MCF 10A (cell line): ENCODE measurements at regions of chr9 and their contacts with region 1.

Region 1: DNA sequence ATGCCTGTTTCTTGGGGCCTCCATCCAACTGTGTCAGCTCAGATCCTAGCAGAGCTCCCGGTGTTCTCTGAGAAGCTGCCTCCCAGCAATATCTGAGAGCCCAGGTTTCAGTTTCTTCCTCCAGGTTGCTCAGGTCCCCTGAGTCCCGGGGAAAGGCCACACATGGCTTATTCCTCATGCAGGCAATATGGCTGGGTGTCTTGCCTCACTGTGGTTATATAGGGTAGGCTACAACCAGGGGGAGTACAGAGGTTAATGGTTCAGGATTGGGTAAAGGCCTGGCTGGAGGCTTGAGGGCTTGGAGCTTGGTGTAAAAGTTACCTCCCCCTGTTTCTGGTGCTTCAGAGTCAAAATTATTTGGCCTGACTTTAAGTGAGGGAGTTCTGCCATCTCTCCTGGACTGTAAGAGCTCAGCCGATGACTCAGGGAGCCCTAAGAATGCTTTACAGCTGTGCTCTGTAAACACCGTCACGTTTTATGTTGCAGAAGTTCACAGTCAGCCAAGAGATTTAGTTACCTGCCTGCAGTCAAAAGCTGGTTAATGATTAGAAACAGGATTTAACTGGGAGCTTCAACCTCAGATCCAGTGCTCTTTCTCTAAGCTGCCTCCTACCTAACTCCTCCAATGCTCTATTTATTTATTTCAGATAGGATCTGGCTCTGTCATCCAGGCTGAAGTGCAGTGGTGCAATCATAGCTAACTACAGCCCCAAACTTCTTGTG is 24.3 kb upstream of the UBAP2 start:
- DNase-seq: peak; percentile 80
- H3K4me3 Mint-ChIP-seq: no peak overlapping the region
- H3K27ac Mint-ChIP-seq: peak overlapping the region; percentile 81
- H3K4me1 Mint-ChIP-seq: peaks cover 22% of the 10 kb centered on the region
- H3K27me3 Mint-ChIP-seq: no peaks in the 10 kb centered on the region
- CTCF ChIP-seq: no peak

Region 2: DNA sequence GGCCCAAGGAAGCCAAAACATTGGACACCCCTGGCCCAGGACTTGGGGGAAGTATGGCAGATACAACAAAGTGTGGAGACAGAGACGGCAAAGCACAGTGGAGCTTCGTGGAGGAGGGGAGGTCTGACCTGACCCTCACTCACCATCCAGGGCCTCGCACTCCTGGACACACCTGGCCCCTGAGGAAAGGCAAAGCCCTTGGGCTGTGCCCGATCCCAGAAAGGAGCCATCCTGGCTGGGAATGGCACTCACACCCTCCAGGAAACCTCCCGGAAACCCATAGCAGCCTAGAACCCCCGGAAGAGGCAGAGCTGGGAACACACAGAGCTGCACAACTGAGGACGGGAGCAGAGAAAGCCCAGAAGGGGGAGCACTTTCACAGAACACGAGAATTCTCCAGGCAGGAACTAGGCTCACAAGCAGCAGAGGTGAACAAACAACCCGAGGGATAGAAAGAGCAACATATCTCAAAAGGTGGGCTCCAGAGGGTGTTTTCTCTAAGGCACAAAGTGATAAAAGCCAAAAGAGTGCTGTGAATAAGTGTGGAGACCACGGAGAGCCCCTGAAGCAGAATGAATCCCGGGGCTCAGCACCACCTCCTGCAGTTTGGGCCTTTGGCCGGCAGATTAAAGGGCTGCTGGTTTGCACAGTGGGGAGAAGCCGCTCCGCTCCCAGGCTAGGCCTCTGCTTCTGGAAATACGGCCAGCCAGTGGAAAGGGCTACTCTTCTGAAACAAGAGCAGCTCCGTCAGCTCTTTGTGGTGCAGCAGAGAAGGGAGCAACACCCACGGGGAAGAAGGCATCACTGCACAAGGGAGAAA is 147.8 kb before region 1 on chr9:
- CTCF ChIA-PET with region 1: interaction called, 22 read pairs
- POLR2A ChIA-PET with region 1: no interaction called
- intact Hi-C with region 1: loop called (anchors 5 kb)
- DNase-seq: peak; percentile 67
- H3K4me3 Mint-ChIP-seq: no peak overlapping the region
- H3K27ac Mint-ChIP-seq: no peak overlapping the region
- H3K4me1 Mint-ChIP-seq: no peaks in the 10 kb centered on the region
- H3K27me3 Mint-ChIP-seq: no peaks in the 10 kb centered on the region
- CTCF ChIP-seq: peak; percentile 43

Region 3: DNA sequence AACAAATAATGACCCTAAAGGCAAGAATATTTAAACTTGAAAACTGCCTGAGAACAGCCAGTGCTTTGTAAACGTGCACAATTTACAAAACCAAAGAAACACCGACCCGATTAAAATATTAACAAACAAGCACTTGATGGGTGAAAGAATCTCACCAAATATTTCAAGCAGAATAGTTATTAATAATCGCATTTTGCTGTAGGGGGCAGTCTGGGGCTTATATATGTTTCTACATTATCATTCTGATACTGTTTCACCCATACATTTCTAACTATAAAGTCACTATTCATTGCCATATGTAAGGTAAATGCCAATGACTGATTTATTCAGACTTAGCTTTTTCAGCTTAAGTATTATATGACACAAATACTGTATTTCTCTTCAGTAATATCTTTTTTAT is 62.0 kb before region 1 on chr9:
- CTCF ChIA-PET with region 1: interaction called, 11 read pairs
- POLR2A ChIA-PET with region 1: interaction called, 9 read pairs
- intact Hi-C with region 1: loop called (anchors 2 kb)
- DNase-seq: peak; percentile 22
- H3K4me3 Mint-ChIP-seq: no peak overlapping the region
- H3K27ac Mint-ChIP-seq: no peak overlapping the region
- H3K4me1 Mint-ChIP-seq: no peaks in the 10 kb centered on the region
- H3K27me3 Mint-ChIP-seq: no peaks in the 10 kb centered on the region
- CTCF ChIP-seq: peak; percentile 29

Region 4: GRCh38 chr9:34035656-34036055 is 37.4 kb before region 1 on chr9:
- CTCF ChIA-PET with region 1: interaction called, 10 read pairs
- POLR2A ChIA-PET with region 1: interaction called, 4 read pairs
- intact Hi-C with region 1: no loop called
- DNase-seq: no peak
- H3K4me3 Mint-ChIP-seq: no peak overlapping the region
- H3K27ac Mint-ChIP-seq: no peak overlapping the region
- H3K4me1 Mint-ChIP-seq: peaks cover 6% of the 10 kb centered on the region
- H3K27me3 Mint-ChIP-seq: no peaks in the 10 kb centered on the region
- CTCF ChIP-seq: no peak

Region 5: DNA sequence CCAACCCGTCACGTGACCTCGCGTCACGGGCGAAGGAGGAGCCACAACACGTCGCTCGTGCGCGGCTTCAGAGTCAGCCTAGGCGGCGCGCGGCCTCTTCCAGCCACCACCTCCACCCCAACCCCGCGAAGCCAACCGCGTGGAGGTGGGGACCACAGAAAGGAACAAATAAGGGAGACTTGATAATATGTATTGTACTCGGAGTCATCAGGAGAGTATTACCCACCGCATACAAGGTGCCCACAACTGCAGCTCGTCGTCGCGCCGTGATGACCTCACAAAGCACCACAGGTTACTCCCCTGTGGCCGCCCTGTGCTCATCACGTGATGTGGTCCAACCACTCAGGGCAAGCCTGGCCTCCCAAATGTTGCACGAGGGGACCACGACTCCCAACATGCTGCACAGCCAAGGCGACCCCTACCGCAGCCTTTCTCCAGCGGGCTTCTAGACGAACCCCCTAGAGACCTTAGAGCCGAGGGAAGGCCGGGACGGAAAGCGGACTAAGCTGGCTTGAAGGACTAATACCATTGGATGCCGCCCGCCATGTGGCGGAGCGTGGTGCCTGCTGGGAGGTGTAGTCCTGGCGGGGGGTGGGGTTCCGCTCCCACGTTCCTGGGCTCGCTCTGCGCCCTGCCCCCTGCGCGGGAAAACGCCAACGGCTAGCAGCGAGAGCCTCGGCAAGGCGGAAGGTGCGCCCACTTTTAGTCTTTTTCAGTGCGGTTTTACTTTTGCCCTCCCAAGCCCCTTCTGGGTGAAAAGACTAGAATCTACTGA is 23.9 kb before region 1 on chr9:
- CTCF ChIA-PET with region 1: interaction called, 20 read pairs
- POLR2A ChIA-PET with region 1: interaction called, 105 read pairs
- intact Hi-C with region 1: no loop called
- DNase-seq: peak; percentile 98
- H3K4me3 Mint-ChIP-seq: peak overlapping the region; percentile 89
- H3K27ac Mint-ChIP-seq: peak overlapping the region; percentile 99
- H3K4me1 Mint-ChIP-seq: peaks cover 20% of the 10 kb centered on the region
- H3K27me3 Mint-ChIP-seq: no peaks in the 10 kb centered on the region
- CTCF ChIP-seq: no peak

Region 6: DNA sequence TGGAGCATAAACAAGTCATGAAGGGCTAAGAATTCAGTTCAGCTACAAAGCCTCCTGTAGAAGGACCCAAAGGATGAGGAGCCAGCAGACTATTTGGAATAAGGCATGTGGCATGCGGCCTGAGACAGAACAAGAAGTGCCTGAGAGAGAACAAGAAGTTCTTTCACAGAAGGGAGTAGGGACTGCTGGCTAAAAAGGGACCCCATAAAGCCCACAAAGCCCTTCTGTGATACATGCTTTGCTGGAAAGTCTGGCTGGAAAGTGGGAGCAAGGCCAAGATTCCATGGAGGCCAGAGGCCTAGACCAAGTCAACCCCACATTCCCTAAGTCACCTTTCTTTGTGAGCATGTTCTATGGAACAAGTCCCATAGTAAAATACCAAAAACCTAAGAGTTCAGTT is 11.5 kb after region 1 on chr9:
- CTCF ChIA-PET with region 1: interaction called, 26 read pairs
- POLR2A ChIA-PET with region 1: interaction called, 12 read pairs
- intact Hi-C with region 1: no loop called
- DNase-seq: no peak
- H3K4me3 Mint-ChIP-seq: no peak overlapping the region
- H3K27ac Mint-ChIP-seq: no peak overlapping the region
- H3K4me1 Mint-ChIP-seq: no peaks in the 10 kb centered on the region
- H3K27me3 Mint-ChIP-seq: no peaks in the 10 kb centered on the region
- CTCF ChIP-seq: no peak

Region 7: GRCh38 chr9:34093578-34093977 is 20.5 kb after region 1 on chr9:
- CTCF ChIA-PET with region 1: interaction called, 10 read pairs
- POLR2A ChIA-PET with region 1: interaction called, 3 read pairs
- intact Hi-C with region 1: no loop called
- DNase-seq: no peak
- H3K4me3 Mint-ChIP-seq: no peak overlapping the region
- H3K27ac Mint-ChIP-seq: no peak overlapping the region
- H3K4me1 Mint-ChIP-seq: no peaks in the 10 kb centered on the region
- H3K27me3 Mint-ChIP-seq: no peaks in the 10 kb centered on the region
- CTCF ChIP-seq: no peak

Region 8: GRCh38 chr9:34139477-34140146 is 66.6 kb after region 1 on chr9:
- CTCF ChIA-PET with region 1: no interaction called
- POLR2A ChIA-PET with region 1: no interaction called
- intact Hi-C with region 1: no loop called
- DNase-seq: peak; percentile 89
- H3K4me3 Mint-ChIP-seq: no peak overlapping the region
- H3K27ac Mint-ChIP-seq: no peak overlapping the region
- H3K4me1 Mint-ChIP-seq: peaks cover 15% of the 10 kb centered on the region
- H3K27me3 Mint-ChIP-seq: no peaks in the 10 kb centered on the region
- CTCF ChIP-seq: peak; percentile 30